Thyroid gland (tissue), 4 donors: ENCODE measurements at regions of chr3 and their contacts with region 1.

Region 1: DNA sequence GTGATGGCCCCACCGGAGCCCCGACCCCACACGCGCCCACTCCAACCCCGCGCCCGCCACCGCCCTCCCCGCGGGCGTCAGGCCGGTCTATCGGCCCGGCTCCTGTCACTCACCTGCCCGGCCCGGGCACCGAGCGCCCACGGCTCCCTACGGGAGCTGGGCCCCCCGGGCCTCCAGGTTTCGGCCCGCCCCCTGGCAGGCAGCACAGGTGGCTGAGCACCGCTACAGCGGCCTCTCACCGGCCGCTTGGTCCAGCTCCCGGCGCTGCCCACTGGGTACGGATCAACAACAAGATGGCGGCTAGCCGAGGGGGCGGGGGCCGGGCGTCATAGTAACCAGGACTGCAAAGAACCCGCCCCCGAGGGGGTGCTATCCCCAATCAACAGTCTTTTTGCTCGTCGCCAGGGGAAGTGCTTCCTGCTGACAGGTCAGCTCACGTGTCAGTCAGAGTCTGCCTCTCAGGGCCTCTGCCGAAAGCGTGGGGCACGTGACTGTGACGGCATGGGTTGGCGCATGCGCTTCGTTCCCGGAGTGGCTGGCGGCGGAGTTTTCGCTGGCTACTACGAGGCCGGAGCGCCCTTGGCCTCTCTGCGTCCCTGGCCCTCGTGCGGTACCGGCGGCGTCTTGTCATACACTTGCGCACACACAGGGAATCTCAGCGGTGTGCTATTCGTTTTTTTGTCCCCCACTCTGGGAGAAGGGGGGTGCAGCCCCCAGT is at the start of gene IP6K1:
- DNase-seq: peak; percentile 100
- H3K4me3 ChIP-seq: peak within 1 kb of the TSS; percentile 79 to 95 (median 87)
- H3K27ac ChIP-seq: peak within 1 kb of the TSS; percentile 97 to 98 (median 97)
- H3K4me1 ChIP-seq: peaks cover 11 to 28% of the 10 kb centered on the region in 2 donors
- H3K27me3 ChIP-seq: no peaks in the 10 kb centered on the region
- CTCF ChIP-seq: peak in 2 of 6 experiments; percentile 6 to 21
- POLR2A ChIP-seq: peak; percentile 78 to 92
- total RNA-seq, gene IP6K1: 42.4 to 74.0 (median 43.8) TPM

Region 2: GRCh38 chr3:49723628-49724551 is 62.5 kb before region 1 on chr3 and contains the start of gene GMPPB:
- intact Hi-C with region 1: loop called (anchors 5 kb)
- DNase-seq: peak; percentile 99
- H3K4me3 ChIP-seq: peak within 1 kb of the TSS; percentile 86 to 98 (median 96)
- H3K27ac ChIP-seq: peak within 1 kb of the TSS; percentile 88 to 98 (median 88)
- H3K4me1 ChIP-seq: peaks cover 23 to 35% of the 10 kb centered on the region in 2 donors
- H3K27me3 ChIP-seq: no peaks in the 10 kb centered on the region
- CTCF ChIP-seq: peak in 1 of 6 experiments; percentile 5
- POLR2A ChIP-seq: peak; percentile 40 to 80
- total RNA-seq, gene GMPPB: 28.5 to 85.6 (median 57.7) TPM

Region 3: GRCh38 chr3:49734752-49735151 is 51.6 kb before region 1 on chr3:
- intact Hi-C with region 1: no loop called
- DNase-seq: no peak
- H3K4me3 ChIP-seq: no peak overlapping the region
- H3K27ac ChIP-seq: peak overlapping the region in 1 of 3 donors; percentile 20
- H3K4me1 ChIP-seq: peaks cover 13% of the 10 kb centered on the region in 2 donors
- H3K27me3 ChIP-seq: no peaks in the 10 kb centered on the region
- CTCF ChIP-seq: no peak
- POLR2A ChIP-seq: no peak